ENCODE measurements at regions of chr2 and their contacts with region 1.

Region 1: GRCh38 chr2:69306822-69307578 is 80.0 kb downstream of the GFPT1 start:
- DNase-seq: peak; percentile 86
- H3K4me3 ChIP-seq: peak overlapping the region; percentile 44 to 66 (median 62)
- H3K27ac ChIP-seq: peak overlapping the region; percentile 89 to 93 (median 90)
- H3K4me1 ChIP-seq: peaks cover 36 to 58% (median 54%) of the 10 kb centered on the region in 4 donors
- H3K27me3 ChIP-seq: no peaks in the 10 kb centered on the region
- CTCF ChIP-seq: peak; percentile 71 to 95 (median 85)
- EP300 ChIP-seq: no peak
- POLR2A ChIP-seq: peak; percentile 33

Region 2: GRCh38 chr2:69007169-69007568 is 299.8 kb before region 1 on chr2:
- in situ Hi-C with region 1: loop called in 3 of 4 experiments (anchors 10 kb)
- intact Hi-C with region 1: loop called (anchors 1 kb)
- DNase-seq: no peak
- H3K4me3 ChIP-seq: no peak overlapping the region
- H3K27ac ChIP-seq: no peak overlapping the region
- H3K4me1 ChIP-seq: no peaks in the 10 kb centered on the region
- H3K27me3 ChIP-seq: no peaks in the 10 kb centered on the region
- CTCF ChIP-seq: no peak
- EP300 ChIP-seq: no peak
- POLR2A ChIP-seq: no peak

Region 3: GRCh38 chr2:69012310-69013141 is 294.5 kb before region 1 on chr2:
- in situ Hi-C with region 1: loop called in 3 of 4 experiments (anchors 10 kb)
- intact Hi-C with region 1: loop called (anchors 1 kb)
- DNase-seq: peak; percentile 53
- H3K4me3 ChIP-seq: peak overlapping the region; percentile 44 to 80 (median 57)
- H3K27ac ChIP-seq: peak overlapping the region; percentile 81 to 88 (median 86)
- H3K4me1 ChIP-seq: peaks cover 0 to 43% (median 14%) of the 10 kb centered on the region in 4 donors
- H3K27me3 ChIP-seq: peaks cover 45% of the 10 kb centered on the region
- CTCF ChIP-seq: peak; percentile 66 to 83 (median 74)
- EP300 ChIP-seq: no peak
- POLR2A ChIP-seq: no peak